A673 (cell line): ENCODE measurements at regions of chr20 and their contacts with region 1.

Region 1: DNA sequence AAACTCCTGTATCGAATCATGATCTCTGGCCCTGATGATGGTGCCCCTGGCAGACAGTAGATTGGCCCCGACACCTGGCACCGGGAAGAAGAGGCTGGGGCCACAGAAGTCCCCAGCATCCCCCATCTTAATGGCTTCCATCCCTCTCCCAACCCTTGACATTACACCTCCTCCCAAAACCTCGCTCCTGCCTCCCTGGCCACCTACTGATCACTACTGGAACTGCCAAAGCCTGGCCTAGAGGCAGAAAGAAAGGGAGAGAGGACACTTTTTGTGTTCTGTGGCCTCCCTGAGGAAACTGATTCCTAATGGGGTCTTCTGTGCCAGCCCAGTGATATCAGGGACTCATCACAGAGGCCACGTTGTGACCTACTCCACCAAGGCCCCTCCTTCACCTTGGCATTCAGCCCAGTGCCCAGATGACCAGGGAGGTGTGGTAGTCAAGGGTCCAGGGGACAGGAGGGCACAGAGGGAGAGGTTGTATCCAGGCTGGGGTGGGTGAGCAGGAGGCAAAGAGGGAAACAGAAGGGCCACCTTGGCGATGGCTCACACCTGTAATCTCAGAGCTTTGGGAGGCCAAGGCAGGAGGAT is 6.1 kb downstream of the C20orf173 start:
- DNase-seq: peak; percentile 53
- H3K4me3 ChIP-seq: no peak overlapping the region
- H3K27ac ChIP-seq: no peak overlapping the region
- H3K4me1 ChIP-seq: peaks cover 4% of the 10 kb centered on the region
- H3K27me3 ChIP-seq: no peaks in the 10 kb centered on the region
- CTCF ChIP-seq: peak; percentile 58

Region 2: GRCh38 chr20:34915749-34916455 is 607.5 kb before region 1 on chr20:
- CTCF ChIA-PET with region 1: no interaction called
- POLR2A ChIA-PET with region 1: no interaction called
- intact Hi-C with region 1: no loop called
- DNase-seq: no peak
- H3K4me3 ChIP-seq: no peak overlapping the region
- H3K27ac ChIP-seq: no peak overlapping the region
- H3K4me1 ChIP-seq: no peaks in the 10 kb centered on the region
- H3K27me3 ChIP-seq: no peaks in the 10 kb centered on the region
- CTCF ChIP-seq: no peak

Region 3: DNA sequence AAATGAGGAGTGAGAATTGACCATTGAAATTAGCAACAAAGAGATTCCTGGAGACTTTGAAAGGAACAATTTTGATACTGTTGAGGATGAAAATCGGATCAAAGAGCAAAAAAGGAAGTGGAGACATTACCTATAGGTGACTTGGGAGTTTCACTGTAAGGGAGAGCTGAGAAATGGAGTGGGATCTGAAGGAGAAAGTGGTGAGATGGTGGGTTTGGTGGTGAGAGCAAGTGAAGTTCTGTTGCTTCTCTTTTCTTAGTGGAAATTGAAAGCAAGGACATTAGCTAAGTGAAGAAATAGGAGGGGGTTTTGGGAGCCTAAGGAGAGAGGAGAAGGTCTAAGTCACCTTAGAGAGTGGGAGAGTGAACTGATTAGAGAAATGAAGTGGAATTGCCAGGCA is 22.7 kb after region 1 on chr20:
- CTCF ChIA-PET with region 1: interaction called, 21 read pairs
- POLR2A ChIA-PET with region 1: no interaction called
- intact Hi-C with region 1: no loop called
- DNase-seq: no peak
- H3K4me3 ChIP-seq: no peak overlapping the region
- H3K27ac ChIP-seq: no peak overlapping the region
- H3K4me1 ChIP-seq: peaks cover 7% of the 10 kb centered on the region
- H3K27me3 ChIP-seq: no peaks in the 10 kb centered on the region
- CTCF ChIP-seq: no peak

Region 4: GRCh38 chr20:35664544-35665221 is 141.3 kb after region 1 on chr20 and contains the starts of genes CPNE1 and RBM12:
- CTCF ChIA-PET with region 1: no interaction called
- POLR2A ChIA-PET with region 1: no interaction called
- intact Hi-C with region 1: no loop called
- DNase-seq: peak; percentile 96
- H3K4me3 ChIP-seq: peak within 1 kb of the TSS; percentile 69
- H3K27ac ChIP-seq: peak within 1 kb of the TSS; percentile 97
- H3K4me1 ChIP-seq: peaks cover 19% of the 10 kb centered on the region
- H3K27me3 ChIP-seq: no peaks in the 10 kb centered on the region
- CTCF ChIP-seq: no peak
- total RNA-seq, gene CPNE1: 273 TPM in 2 replicates
- total RNA-seq, gene RBM12: 114 and 124 TPM in 2 replicates